ENCODE measurements at regions of chr20 and their contacts with region 1.

Region 1: DNA sequence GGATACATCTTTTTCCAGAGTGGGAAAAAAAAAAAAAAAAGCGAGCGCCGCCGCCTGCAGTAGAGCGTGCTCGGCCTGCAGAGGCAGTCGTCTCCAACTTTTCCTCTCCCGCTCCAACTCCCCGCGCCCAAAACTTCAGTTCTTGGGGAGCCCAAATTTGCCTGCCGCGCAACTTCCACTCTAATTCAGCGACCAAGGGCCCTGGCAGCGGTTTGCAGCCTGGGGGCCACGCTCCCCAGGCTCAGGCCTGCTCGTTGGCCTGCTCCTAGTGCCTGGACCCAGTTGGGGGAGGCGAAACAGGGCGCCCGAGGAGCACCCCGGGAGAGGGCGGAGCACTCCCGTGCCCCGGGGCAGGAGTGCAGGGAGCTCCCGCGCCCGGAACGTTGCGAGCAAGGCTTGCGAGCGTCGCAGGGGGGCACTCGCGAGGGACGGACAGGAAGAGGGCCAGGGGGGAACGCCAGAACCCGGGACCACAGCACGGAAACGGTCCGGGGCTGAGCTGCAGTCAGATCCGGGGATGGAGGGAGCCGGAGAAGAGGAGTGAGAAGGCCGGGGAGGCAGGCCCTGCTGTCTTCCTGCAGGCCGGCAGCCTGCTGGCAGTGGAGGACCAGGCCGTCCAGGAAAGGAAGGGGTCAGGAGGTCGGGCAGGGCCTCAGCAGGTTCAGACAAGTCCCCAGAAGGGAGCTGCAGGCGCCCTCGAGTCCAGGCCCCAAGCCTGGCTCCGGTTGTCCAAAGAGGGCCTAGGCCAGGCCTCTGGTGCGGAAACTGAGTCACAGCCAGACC is at the start of gene STX16:
- DNase-seq: peak; percentile 94
- H3K4me3 ChIP-seq: peak within 1 kb of the TSS; percentile 81 to 88 (median 84)
- H3K27ac ChIP-seq: peak within 1 kb of the TSS; percentile 88 to 98 (median 95)
- H3K4me1 ChIP-seq: peaks cover 39 to 84% (median 77%) of the 10 kb centered on the region in 4 donors
- H3K27me3 ChIP-seq: no peaks in the 10 kb centered on the region
- CTCF ChIP-seq: peak; percentile 44 to 73 (median 62)
- EP300 ChIP-seq: no peak
- POLR2A ChIP-seq: peak; percentile 23
- total RNA-seq, gene STX16: 36.6 to 57.7 (median 43.5) TPM

Region 2: DNA sequence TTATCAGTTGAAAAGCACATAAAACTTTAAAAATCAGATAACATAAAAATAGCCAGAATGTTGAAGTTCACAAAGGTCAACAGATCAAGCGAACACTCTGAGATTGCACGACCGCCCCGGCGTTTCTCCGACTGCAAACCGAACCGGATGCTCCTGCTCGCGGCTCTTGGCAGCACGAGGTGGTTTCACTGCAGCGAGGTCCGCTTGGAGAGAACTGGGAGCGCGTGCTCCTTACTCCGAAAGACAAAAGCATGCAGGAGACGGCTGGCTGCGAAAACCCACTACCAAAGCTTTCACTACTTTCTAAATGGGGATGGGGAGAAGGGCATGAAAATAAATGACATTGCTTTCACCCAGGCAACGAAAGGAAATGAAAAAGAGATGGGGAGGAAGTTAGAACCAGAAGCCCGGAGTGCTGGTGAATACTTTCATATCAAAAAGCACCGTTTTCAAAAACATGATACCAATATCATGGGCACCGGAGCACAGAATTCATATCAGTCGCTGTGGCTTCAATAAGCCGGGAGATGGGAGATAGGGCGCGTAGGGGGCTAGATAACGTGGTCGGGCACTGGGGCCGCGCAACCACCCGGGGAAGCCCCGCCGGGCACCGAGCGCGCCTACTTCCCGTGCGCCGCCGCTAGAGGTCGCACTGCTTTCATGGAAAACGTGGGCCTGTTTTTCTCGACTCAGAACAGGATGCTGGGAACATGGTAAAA is 414.2 kb before region 1 on chr20:
- intact Hi-C with region 1: loop called (anchors 2 kb)
- DNase-seq: peak; percentile 94
- H3K4me3 ChIP-seq: peak overlapping the region; percentile 50 to 58 (median 52)
- H3K27ac ChIP-seq: no peak overlapping the region
- H3K4me1 ChIP-seq: peaks cover 0 to 13% (median 9%) of the 10 kb centered on the region in 4 donors
- H3K27me3 ChIP-seq: no peaks in the 10 kb centered on the region
- CTCF ChIP-seq: peak in 2 of 3 experiments; percentile 90 to 98
- EP300 ChIP-seq: no peak
- POLR2A ChIP-seq: no peak

Region 3: GRCh38 chr20:58481481-58482021 is 169.4 kb before region 1 on chr20:
- intact Hi-C with region 1: loop called (anchors 5 kb)
- DNase-seq: no peak
- H3K4me3 ChIP-seq: no peak overlapping the region
- H3K27ac ChIP-seq: no peak overlapping the region
- H3K4me1 ChIP-seq: peaks cover 0 to 7% (median 7%) of the 10 kb centered on the region in 4 donors
- H3K27me3 ChIP-seq: no peaks in the 10 kb centered on the region
- CTCF ChIP-seq: peak; percentile 70 to 80 (median 77)
- EP300 ChIP-seq: no peak
- POLR2A ChIP-seq: no peak

Region 4: DNA sequence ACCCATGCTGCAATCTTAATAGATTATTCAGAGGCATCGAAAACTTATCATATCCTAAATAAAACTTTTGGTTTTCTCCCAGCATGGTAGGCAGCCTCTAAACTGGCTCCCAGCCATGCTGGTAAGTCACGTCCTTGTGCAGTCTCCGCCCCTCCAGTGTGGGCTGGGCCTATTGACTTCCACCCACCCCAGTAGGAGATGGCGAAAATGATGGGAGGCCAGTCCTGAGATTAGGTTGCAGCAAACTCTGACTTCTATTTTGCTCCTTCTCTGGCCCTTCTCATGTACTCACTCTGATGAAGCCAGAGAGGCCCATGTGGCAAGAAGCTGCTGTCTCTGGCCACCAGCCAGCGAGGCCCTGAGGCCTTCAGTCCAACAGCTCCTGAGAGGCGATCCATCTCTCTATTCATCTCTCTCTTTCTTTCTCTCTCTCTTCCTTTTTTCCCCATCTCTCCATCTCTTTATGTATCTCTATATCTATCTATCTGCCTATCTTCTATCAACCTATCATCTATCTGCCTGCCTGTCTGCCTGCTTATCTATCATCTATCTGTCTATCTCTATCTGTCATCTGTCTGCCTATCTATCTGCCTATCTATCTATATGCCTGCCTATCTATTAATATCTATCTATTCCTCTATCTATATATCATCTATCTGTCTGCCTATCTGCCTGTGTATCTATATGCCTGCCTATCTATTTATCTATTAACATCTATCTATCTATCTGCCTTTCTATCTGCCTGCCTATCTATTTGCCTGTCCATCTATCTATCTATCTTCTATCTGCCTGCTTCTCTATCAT is 52.6 kb before region 1 on chr20:
- intact Hi-C with region 1: loop called (anchors 5 kb)
- DNase-seq: no peak
- H3K4me3 ChIP-seq: no peak overlapping the region
- H3K27ac ChIP-seq: peak overlapping the region; percentile 87 to 89 (median 88)
- H3K4me1 ChIP-seq: peaks cover 4 to 76% (median 71%) of the 10 kb centered on the region in 4 donors
- H3K27me3 ChIP-seq: no peaks in the 10 kb centered on the region
- CTCF ChIP-seq: no peak
- EP300 ChIP-seq: no peak
- POLR2A ChIP-seq: no peak

Region 5: GRCh38 chr20:58692594-58693226 is 41.7 kb after region 1 on chr20 and contains the start of gene NPEPL1:
- intact Hi-C with region 1: loop called (anchors 2 kb)
- DNase-seq: no peak
- H3K4me3 ChIP-seq: peak within 1 kb of the TSS; percentile 54 to 78 (median 62)
- H3K27ac ChIP-seq: peak within 1 kb of the TSS; percentile 86 to 97 (median 96)
- H3K4me1 ChIP-seq: peaks cover 30 to 55% (median 55%) of the 10 kb centered on the region in 4 donors
- H3K27me3 ChIP-seq: no peaks in the 10 kb centered on the region
- CTCF ChIP-seq: peak in 2 of 3 experiments; percentile 40 to 49
- EP300 ChIP-seq: no peak
- POLR2A ChIP-seq: no peak
- total RNA-seq, gene NPEPL1: 29.0 to 59.0 (median 50.5) TPM